ENCODE measurements at regions of chr4 and their contacts with region 1.

Region 1: DNA sequence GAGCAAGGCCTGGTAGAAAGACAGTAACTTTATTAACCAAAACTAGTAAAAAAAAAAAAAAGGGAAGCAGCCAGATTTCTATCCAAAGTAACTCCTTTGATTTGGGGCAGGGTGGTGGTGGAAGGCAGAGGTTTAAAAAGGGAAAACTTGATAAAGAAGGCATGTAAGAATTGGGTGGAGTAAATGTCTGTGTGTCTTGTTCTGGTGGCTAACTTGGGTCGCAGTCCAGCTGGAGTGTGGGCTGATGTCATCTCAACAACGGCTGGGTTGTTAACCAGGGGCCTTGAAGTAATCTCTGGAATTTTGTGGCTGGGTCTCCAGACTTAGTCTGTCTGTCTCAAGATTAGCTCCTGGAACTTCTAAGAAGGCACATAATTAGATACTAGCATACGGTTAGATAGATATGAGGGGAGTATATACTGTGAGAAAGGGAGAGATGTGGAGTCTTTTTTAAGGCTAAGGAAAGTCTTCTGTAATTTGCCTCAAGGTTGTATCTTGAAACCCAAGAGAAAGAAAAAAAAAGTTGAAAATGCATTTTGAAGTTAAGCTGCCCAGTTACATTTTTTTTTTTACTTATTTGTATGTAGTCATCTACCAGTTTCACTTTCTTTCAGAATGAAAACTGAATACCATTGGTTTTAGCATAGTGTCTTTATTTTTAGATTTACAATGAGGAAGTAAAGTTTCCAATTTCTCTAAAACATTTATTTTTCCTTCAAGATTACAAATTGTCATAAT is 48.3 kb downstream of the MTHFD2L start:
- DNase-seq: peak; percentile 33 to 51
- H3K4me3 ChIP-seq: no peak overlapping the region
- H3K4me3 Mint-ChIP-seq: peak overlapping the region; percentile 51
- H3K27ac Mint-ChIP-seq: peak overlapping the region; percentile 76
- H3K4me1 ChIP-seq: peaks cover 63% of the 10 kb centered on the region
- H3K4me1 Mint-ChIP-seq: peaks cover 46% of the 10 kb centered on the region
- H3K27me3 ChIP-seq: no peaks in the 10 kb centered on the region
- H3K27me3 Mint-ChIP-seq: no peaks in the 10 kb centered on the region
- CTCF ChIP-seq: no peak

Region 2: GRCh38 chr4:73964862-73965611 is 241.2 kb before region 1 on chr4:
- CTCF ChIA-PET with region 1: no interaction called
- POLR2A ChIA-PET with region 1: no interaction called
- intact Hi-C with region 1: no loop called
- DNase-seq: peak in 1 of 2 experiments; percentile 25
- H3K4me3 ChIP-seq: no peak overlapping the region
- H3K4me3 Mint-ChIP-seq: no peak overlapping the region
- H3K27ac Mint-ChIP-seq: no peak overlapping the region
- H3K4me1 ChIP-seq: no peaks in the 10 kb centered on the region
- H3K4me1 Mint-ChIP-seq: no peaks in the 10 kb centered on the region
- H3K27me3 ChIP-seq: no peaks in the 10 kb centered on the region
- H3K27me3 Mint-ChIP-seq: no peaks in the 10 kb centered on the region
- CTCF ChIP-seq: peak in 1 of 2 experiments; percentile 23

Region 3: DNA sequence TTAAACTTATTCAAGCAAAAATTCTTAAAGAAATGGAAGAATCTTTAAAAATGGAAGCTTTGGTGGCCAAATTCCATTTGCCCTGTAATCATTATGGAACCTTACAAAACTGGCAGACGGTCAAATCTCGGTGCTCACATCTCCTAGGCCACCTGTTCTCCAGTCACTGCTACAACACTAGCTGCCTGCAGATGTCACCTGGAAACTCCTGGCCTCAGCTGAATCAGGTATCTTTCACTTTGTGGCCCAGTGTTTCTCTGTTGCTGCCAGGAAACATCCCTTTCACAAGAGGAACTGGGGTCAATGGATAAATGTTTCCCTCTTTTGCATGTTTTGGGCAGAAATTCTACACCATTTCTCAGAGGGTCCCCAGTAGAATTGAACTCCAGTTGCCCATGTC is 163.6 kb before region 1 on chr4:
- CTCF ChIA-PET with region 1: no interaction called
- POLR2A ChIA-PET with region 1: no interaction called
- intact Hi-C with region 1: no loop called
- DNase-seq: peak; percentile 39 to 47
- H3K4me3 ChIP-seq: no peak overlapping the region
- H3K4me3 Mint-ChIP-seq: no peak overlapping the region
- H3K27ac Mint-ChIP-seq: no peak overlapping the region
- H3K4me1 ChIP-seq: no peaks in the 10 kb centered on the region; the same call in 1 of the 2 replicates
- H3K4me1 Mint-ChIP-seq: peaks cover 15% of the 10 kb centered on the region
- H3K27me3 ChIP-seq: no peaks in the 10 kb centered on the region
- H3K27me3 Mint-ChIP-seq: no peaks in the 10 kb centered on the region
- CTCF ChIP-seq: peak; percentile 20 to 43

Region 4: DNA sequence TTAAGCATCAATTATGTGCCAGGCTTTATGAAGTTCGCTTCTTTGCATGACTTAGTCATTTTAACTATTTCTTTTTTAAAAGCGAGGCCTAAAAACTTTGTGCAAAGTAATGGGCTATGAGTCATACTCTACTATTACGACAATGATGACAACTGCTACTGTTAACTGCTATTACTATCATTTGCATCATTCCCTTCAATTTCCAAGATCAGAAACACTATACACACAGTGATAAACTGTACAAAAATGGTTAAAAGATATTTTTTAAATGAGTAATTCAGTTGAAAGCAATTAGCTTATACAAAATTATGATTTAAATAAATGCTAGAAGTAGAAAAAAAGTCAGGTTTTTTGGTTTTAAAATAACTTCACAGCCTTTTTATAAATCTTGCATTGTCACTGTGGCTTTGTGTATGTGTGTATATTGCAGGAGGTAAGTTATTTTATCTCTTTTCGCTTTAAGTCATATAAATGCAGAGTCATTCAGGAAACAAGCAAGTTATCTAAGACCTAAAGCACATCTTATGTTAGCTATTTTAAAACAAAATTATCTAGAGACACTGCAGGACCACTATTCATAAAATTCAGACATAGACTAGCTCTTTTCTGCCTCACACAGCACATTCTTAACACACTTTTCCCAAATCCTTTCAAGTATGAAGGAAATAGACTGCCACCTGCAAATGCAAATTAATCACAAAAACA is 149.2 kb before region 1 on chr4:
- CTCF ChIA-PET with region 1: no interaction called
- POLR2A ChIA-PET with region 1: no interaction called
- intact Hi-C with region 1: no loop called
- DNase-seq: no peak
- H3K4me3 ChIP-seq: no peak overlapping the region
- H3K4me3 Mint-ChIP-seq: no peak overlapping the region
- H3K27ac Mint-ChIP-seq: no peak overlapping the region
- H3K4me1 ChIP-seq: peaks cover 12% of the 10 kb centered on the region
- H3K4me1 Mint-ChIP-seq: peaks cover 7% of the 10 kb centered on the region
- H3K27me3 ChIP-seq: no peaks in the 10 kb centered on the region
- H3K27me3 Mint-ChIP-seq: no peaks in the 10 kb centered on the region
- CTCF ChIP-seq: no peak

Region 5: DNA sequence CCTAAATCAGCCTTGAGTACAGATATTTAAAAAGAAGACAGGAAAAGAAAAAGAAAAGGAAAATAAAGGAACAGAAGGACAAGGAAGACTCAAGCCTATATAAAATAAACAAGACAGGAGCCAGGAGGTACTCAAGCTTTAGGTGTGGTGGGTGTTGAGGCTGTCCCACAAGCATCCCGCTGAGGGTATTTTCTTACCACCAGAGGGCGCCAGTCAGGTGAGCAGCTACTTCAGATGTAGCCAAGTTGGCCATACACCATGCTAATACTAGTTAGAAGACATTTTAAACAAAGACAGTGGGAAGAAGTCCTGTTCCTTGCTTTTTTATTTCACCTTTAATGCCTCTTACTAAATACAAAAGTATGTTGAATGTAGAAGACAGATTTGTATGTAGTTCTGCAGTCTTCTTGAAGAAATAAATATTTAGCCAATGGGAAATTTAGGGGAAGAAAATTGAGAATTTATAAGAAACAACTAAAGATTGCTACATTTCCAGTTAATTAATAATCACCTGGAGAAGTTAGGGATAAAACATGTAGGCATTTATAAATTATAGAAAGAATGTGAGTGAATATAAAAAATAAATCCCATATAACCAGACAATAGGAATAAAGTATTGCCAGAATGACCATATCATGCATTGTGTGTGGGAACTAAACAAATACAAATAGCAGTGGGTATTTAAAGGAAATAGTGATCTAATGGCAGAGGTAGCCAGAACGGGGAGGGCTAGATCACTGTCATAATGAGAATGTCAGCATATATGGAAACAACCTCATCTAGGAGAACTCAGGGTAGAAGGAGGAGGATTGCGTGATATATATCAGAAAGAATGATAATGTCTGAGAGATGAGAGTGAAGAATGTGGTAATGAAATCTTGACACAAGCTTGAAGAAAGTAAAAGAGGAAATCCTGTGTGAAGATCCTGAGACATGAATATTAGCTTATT is 22.7 kb after region 1 on chr4:
- CTCF ChIA-PET with region 1: interaction called, 5 read pairs
- POLR2A ChIA-PET with region 1: no interaction called
- intact Hi-C with region 1: loop called (anchors 1 kb)
- DNase-seq: peak; percentile 77 to 83
- H3K4me3 ChIP-seq: no peak overlapping the region
- H3K4me3 Mint-ChIP-seq: no peak overlapping the region
- H3K27ac Mint-ChIP-seq: no peak overlapping the region
- H3K4me1 ChIP-seq: no peaks in the 10 kb centered on the region
- H3K4me1 Mint-ChIP-seq: no peaks in the 10 kb centered on the region
- H3K27me3 ChIP-seq: no peaks in the 10 kb centered on the region
- H3K27me3 Mint-ChIP-seq: no peaks in the 10 kb centered on the region
- CTCF ChIP-seq: peak; percentile 61 to 73

Region 6: GRCh38 chr4:74667944-74668343 is 461.7 kb after region 1 on chr4:
- CTCF ChIA-PET with region 1: no interaction called
- POLR2A ChIA-PET with region 1: no interaction called
- intact Hi-C with region 1: loop called (anchors 1 kb)
- DNase-seq: peak in 1 of 2 experiments; percentile 57
- H3K4me3 ChIP-seq: no peak overlapping the region
- H3K4me3 Mint-ChIP-seq: peak overlapping the region; percentile 2
- H3K27ac Mint-ChIP-seq: peak overlapping the region; percentile 67
- H3K4me1 ChIP-seq: peaks cover 75% of the 10 kb centered on the region
- H3K4me1 Mint-ChIP-seq: peaks cover 78% of the 10 kb centered on the region
- H3K27me3 ChIP-seq: no peaks in the 10 kb centered on the region
- H3K27me3 Mint-ChIP-seq: no peaks in the 10 kb centered on the region
- CTCF ChIP-seq: no peak